BJ (cell line): ENCODE measurements at regions of chr5 and their contacts with region 1.

Region 1: GRCh38 chr5:57650360-57651069 is 167.9 kb upstream of the ACTBL2 start:
- DNase-seq: peak; percentile 7
- H3K4me3 ChIP-seq: no peak overlapping the region
- H3K27me3 ChIP-seq: no peaks in the 10 kb centered on the region
- CTCF ChIP-seq: peak; percentile 79

Region 2: DNA sequence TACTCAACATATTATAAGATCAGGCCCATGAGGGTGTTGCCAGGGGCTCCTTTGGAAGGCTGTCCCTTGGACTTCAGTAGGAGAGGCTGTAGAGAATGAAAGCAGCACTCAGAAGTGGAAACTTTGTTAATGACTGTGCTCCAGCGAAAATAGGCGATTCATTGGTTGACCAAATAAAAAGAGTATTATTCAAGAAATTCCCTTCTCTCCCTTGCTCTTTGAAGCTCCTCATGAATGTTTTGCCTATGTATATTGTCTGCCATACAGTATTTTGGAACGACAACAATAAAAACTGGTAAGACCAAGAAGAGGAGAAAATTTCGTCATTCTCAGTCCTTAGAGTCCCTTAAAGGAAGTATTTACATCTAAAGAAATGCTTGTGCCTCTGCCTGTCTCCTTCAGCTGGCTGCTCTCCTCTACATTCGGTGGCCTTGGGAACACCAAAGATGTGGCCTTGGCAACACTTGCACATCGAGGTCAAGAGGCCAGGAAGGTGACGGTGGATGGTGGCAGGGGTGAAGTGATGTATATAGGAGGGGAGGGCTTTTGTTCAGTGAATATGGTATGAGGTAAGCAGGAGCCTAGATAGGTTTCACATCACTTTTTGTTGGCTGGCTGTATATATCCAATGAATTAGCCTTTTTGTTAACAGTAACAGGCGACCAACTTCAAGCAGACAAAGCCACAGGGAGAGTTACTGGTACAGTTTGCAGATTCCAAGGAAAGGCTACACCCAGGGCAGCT is 72.9 kb before region 1 on chr5:
- CTCF ChIA-PET with region 1: no interaction called
- POLR2A ChIA-PET with region 1: no interaction called
- DNase-seq: no peak
- H3K4me3 ChIP-seq: no peak overlapping the region
- H3K27me3 ChIP-seq: peaks cover 3% of the 10 kb centered on the region; the same call in 1 of the 2 replicates
- CTCF ChIP-seq: no peak

Region 3: GRCh38 chr5:57635146-57635777 is 15.3 kb before region 1 on chr5:
- CTCF ChIA-PET with region 1: interaction called, 18 read pairs
- POLR2A ChIA-PET with region 1: no interaction called
- DNase-seq: no peak
- H3K4me3 ChIP-seq: no peak overlapping the region
- H3K27me3 ChIP-seq: no peaks in the 10 kb centered on the region; the same call in none of the 2 replicates
- CTCF ChIP-seq: no peak

Region 4: GRCh38 chr5:57662991-57663390 is 12.5 kb after region 1 on chr5:
- CTCF ChIA-PET with region 1: interaction called, 21 read pairs
- POLR2A ChIA-PET with region 1: no interaction called
- DNase-seq: peak; percentile 4
- H3K4me3 ChIP-seq: no peak overlapping the region
- H3K27me3 ChIP-seq: no peaks in the 10 kb centered on the region; the same call in 1 of the 2 replicates
- CTCF ChIP-seq: no peak

Region 5: DNA sequence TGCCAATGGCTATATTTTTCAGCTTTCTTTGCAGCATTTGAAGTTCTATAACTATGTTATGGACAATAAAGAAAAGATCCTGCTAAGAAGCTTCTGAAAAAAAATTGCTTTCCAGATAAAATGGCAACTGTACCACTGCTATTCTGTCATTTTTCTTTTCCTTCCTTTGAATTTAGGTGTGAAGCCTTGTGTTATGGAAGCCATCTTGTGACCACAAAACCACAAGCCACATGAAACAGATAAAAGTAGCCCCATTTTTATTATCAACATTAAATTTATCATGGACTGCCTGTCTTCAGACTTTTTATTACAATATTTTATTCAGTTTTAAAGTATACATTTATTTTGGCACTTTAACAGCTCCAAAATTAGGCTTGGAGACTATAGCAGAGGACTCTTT is 122.0 kb after region 1 on chr5:
- CTCF ChIA-PET with region 1: interaction called, 67 read pairs
- POLR2A ChIA-PET with region 1: no interaction called
- DNase-seq: no peak
- H3K4me3 ChIP-seq: no peak overlapping the region
- H3K27me3 ChIP-seq: no peaks in the 10 kb centered on the region
- CTCF ChIP-seq: no peak

Region 6: DNA sequence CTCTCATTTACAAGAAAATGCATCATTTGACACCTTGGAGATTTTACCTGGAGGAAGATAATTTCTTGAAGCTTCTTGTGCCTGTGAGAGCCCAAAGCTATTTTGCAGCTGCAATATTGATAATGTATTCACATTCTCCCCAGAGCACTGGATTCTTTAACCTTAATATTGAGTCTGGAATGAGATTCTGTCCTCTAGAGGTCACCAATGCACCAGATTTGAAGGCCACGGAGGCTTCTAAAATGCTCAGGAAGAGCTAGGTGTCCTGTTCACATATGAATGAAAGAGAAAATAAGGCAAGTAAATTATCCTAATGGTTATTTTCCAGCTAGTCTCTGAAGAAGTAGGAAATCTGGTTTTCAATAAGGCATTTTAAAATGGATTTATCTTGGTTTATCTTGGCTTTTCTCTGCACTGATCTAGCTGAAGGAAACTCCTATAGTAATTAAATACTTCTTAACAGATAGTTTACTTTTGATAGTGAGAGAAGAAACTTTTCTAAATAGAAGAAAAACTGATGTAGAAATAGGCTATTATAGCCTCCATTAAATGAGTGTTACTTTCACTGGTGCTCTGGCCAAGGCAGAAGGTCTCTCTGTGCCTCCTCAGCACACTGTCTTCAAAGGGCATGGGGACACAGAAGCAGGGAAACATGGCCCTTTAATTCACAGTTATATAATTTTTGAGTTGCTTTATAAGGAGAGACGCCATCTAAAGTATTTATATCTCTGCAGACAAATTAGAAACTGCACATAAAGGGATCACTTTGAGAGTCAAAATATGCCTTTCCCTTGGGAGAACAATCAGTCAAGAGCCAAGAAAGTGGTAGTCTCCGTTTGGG is 129.1 kb after region 1 on chr5:
- CTCF ChIA-PET with region 1: interaction called, 67 read pairs
- POLR2A ChIA-PET with region 1: no interaction called
- DNase-seq: no peak
- H3K4me3 ChIP-seq: no peak overlapping the region
- H3K27me3 ChIP-seq: no peaks in the 10 kb centered on the region
- CTCF ChIP-seq: peak; percentile 71